Natural killer cell (primary cell): ENCODE measurements at regions of chr2 and their contacts with region 1.

Region 1: GRCh38 chr2:32946314-32947075 is at the start of gene LTBP1:
- DNase-seq: peak; percentile 37 to 64
- ATAC-seq: peak; percentile 78 to 86 (median 80)
- H3K4me3 ChIP-seq: peak within 1 kb of the TSS; percentile 37
- H3K4me3 Mint-ChIP-seq: peak within 1 kb of the TSS; percentile 80
- H3K27ac ChIP-seq: no peak within 1 kb of the TSS
- H3K27ac Mint-ChIP-seq: no peak within 1 kb of the TSS
- H3K4me1 ChIP-seq: peaks cover 10% of the 10 kb centered on the region
- H3K4me1 Mint-ChIP-seq: peaks cover 0 to 11% of the 10 kb centered on the region in 2 donors
- H3K27me3 ChIP-seq: peaks cover 14% of the 10 kb centered on the region
- H3K27me3 Mint-ChIP-seq: peaks cover 18 to 19% of the 10 kb centered on the region in 2 donors
- CTCF ChIP-seq: peak; percentile 50
- total RNA-seq, gene LTBP1: 1.7 to 4.7 (median 3.5) TPM

Region 2: DNA sequence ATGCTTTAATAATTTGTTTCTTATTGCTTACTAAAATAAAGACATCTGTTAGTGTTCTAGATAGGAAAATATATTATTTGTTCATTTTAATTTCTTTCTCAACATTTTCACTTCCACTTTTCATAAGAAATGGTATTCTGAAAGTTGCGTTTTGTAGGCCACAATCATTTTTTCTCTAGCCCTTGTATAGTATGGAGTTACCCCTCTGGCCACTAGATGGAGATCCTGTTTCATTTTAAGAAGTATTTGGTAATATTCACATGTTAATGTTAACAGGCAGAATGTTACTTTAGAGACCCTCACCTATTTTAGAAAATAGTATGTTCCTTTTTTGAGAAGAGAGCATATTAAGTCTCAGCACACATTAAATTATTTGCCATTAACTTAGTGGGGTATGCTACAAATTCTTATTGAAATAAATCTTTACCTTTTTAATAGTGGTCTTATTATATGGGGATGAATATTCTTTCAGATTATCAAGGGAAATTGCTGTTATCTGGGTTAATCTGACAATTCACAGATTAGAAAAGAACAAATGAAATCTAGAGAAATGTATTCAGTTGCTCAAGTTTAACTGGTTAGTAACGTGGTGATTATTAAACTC is 392.6 kb before region 1 on chr2:
- intact Hi-C with region 1: loop called (anchors 10 kb)
- DNase-seq: peak in 1 of 2 donors; percentile 63
- ATAC-seq: peak; percentile 66 to 73 (median 72)
- H3K4me3 ChIP-seq: no peak overlapping the region
- H3K4me3 Mint-ChIP-seq: no peak overlapping the region
- H3K27ac ChIP-seq: no peak overlapping the region
- H3K27ac Mint-ChIP-seq: no peak overlapping the region
- H3K4me1 ChIP-seq: no peaks in the 10 kb centered on the region
- H3K4me1 Mint-ChIP-seq: no peaks in the 10 kb centered on the region
- H3K27me3 ChIP-seq: no peaks in the 10 kb centered on the region
- H3K27me3 Mint-ChIP-seq: no peaks in the 10 kb centered on the region
- CTCF ChIP-seq: peak; percentile 72